Left ventricle myocardium inferior (tissue), 1 donor: ENCODE measurements at regions of chr9 and their contacts with region 1.

Region 1: GRCh38 chr9:36023260-36024048 is 13.3 kb upstream of the RECK start:
- DNase-seq: peak; percentile 39
- H3K4me3 ChIP-seq: no peak overlapping the region
- H3K27ac ChIP-seq: no peak overlapping the region
- H3K4me1 ChIP-seq: peaks cover 10% of the 10 kb centered on the region
- H3K27me3 ChIP-seq: no peaks in the 10 kb centered on the region
- CTCF ChIP-seq: peak; percentile 86

Region 2: DNA sequence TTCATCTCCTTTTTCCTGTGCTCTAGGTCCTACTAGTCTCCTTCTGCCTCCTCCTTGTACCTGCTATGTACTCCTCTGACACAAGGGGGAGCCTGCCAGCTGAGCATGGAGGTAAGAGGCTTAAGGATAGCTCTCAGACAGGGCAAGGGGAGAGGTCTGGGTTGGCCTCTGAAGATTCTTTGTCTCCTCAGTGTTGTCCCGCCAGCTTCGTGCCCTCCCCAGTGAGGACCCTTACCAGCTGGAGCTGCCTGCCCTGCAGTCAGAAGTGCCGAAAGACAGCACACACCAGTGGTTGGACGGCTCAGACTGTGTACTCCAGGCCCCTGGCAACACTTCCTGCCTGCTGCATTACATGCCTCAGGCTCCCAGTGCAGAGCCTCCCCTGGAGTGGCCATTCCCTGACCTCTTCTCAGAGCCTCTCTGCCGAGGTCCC is 287.2 kb before region 1 on chr9:
- intact Hi-C with region 1: no loop called
- DNase-seq: peak; percentile 48
- H3K4me3 ChIP-seq: no peak overlapping the region
- H3K27ac ChIP-seq: peak overlapping the region; percentile 48
- H3K4me1 ChIP-seq: peaks cover 40% of the 10 kb centered on the region
- H3K27me3 ChIP-seq: no peaks in the 10 kb centered on the region
- CTCF ChIP-seq: peak; percentile 87

Region 3: DNA sequence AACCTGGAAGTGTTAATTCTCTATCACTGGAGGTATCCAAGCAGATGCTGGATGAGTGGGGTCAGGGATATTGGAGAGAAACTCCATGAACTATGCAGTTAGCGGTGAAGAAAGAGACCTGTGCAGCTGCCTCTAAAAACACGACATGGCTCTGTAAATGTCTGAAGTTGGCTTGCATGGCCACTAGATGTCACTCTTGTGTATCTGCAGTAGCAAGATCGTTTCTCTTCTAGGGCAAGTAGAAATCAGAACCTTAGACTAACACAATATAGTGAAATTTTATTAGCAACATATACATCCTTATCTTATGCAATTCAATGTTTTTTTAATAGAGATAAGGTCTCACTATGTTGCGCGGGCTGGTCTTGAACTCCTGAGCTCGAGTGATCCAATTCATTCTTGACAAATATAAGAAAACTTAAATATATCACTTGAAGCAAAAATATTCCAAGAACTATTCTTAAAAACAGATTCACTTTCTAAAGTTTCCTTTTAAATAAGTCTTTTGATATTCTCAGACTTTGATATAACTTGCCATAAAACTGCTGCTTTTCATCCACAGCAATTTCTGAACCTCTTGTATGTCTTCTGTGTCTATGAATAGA is 68.4 kb before region 1 on chr9:
- intact Hi-C with region 1: loop called (anchors 5 kb)
- DNase-seq: no peak
- H3K4me3 ChIP-seq: no peak overlapping the region
- H3K27ac ChIP-seq: peak overlapping the region; percentile 33
- H3K4me1 ChIP-seq: peaks cover 15% of the 10 kb centered on the region
- H3K27me3 ChIP-seq: peaks cover 13% of the 10 kb centered on the region
- CTCF ChIP-seq: peak; percentile 92